ENCODE measurements at regions of chr1 and their contacts with region 1.

Region 1: GRCh38 chr1:97137862-97138514 is 416.4 kb downstream of the PTBP2 start:
- DNase-seq: peak; percentile 42
- ATAC-seq: peak; percentile 77
- H3K4me3 Mint-ChIP-seq: no peak overlapping the region
- H3K27ac Mint-ChIP-seq: no peak overlapping the region
- H3K4me1 Mint-ChIP-seq: peaks cover 4% of the 10 kb centered on the region
- H3K27me3 Mint-ChIP-seq: no peaks in the 10 kb centered on the region

Region 2: DNA sequence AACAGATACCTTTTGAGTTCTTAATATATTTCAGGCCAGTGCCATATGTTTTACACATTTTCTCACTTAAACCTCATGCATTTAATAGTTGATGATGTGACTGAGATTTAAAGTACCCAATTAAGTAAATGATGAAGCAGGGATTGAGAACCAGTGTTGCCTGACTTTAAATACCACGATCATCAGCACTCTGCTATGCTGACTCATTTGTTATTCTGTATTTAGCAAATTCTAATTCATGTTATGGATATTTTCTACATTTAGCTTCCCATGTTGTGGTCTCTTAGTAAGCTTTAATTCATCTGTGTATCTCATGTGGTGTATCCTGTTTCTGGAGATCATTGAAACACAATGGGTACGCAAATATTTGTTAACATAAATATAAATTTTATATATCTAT is 53.4 kb before region 1 on chr1:
- CTCF ChIA-PET with region 1: no interaction called
- POLR2A ChIA-PET with region 1: no interaction called
- DNase-seq: no peak
- ATAC-seq: no peak
- H3K4me3 Mint-ChIP-seq: no peak overlapping the region
- H3K27ac Mint-ChIP-seq: no peak overlapping the region
- H3K4me1 Mint-ChIP-seq: no peaks in the 10 kb centered on the region
- H3K27me3 Mint-ChIP-seq: no peaks in the 10 kb centered on the region

Region 3: DNA sequence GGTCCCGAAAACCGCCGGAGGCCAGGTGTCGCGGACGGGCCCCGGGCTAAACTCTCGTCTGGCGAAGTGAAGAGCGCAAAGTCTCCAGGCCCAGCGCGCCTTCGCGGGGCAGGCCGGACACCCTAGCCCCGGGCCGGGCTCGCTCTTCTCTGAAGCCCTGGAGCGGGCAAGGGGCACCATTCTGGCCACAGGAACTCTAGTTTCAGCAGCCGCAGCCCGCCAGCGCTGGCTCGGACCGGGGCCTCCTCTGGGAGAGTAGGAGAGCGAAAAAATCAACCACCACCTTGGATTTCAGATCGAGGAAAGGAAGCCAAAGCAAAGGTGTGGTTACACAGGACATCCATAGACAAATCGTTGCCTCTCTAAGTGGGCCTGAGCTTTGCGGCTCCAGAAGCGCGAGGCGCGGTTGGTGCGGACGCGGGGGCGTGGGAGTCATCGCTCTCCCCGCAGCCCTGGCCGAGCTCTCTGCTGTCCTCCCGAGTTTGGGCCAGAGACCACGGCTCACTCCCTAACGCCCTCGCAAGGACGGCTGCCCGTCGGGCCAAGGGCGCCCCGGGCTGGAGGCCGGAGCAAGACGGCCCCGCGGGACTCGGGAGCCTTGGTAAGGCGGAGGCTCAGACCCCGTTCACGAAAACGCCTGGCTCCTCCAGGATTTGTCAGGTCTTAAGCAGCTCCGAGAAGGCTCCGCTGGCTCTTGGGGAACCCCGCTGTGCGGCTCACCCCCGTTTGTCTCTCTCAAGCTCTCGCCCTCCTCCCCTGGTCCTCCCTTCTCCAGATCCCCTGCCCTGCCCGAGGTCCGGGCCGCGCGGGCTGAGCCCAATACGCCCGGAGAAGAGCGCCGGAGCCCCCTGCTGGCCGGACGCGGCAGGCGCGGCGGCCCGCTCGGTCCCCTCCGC is 915.7 kb after region 1 on chr1:
- CTCF ChIA-PET with region 1: interaction called, 23 read pairs
- POLR2A ChIA-PET with region 1: no interaction called
- DNase-seq: peak; percentile 64
- ATAC-seq: peak; percentile 99
- H3K4me3 Mint-ChIP-seq: peak overlapping the region; percentile 67
- H3K27ac Mint-ChIP-seq: no peak overlapping the region
- H3K4me1 Mint-ChIP-seq: peaks cover 22% of the 10 kb centered on the region
- H3K27me3 Mint-ChIP-seq: peaks cover 64% of the 10 kb centered on the region